Activated CD8-positive, alpha-beta T cell treated with anti-CD3 and anti-CD28 coated beads, Interleukin-2, amount 10 ng/mL, durations not matched to agents 7 days and 5 days (primary cell): ENCODE measurements at regions of chr17 and their contacts with region 1.

Region 1: GRCh38 chr17:43316522-43317142 is 82.2 kb upstream of the ARL4D start:
- DNase-seq: peak; percentile 40
- ATAC-seq: no peak
- H3K4me3 Mint-ChIP-seq: peak overlapping the region; percentile 15
- H3K27ac Mint-ChIP-seq: peak overlapping the region; percentile 67
- H3K4me1 Mint-ChIP-seq: peaks cover 18% of the 10 kb centered on the region
- H3K27me3 Mint-ChIP-seq: no peaks in the 10 kb centered on the region

Region 2: GRCh38 chr17:42997984-42998938 is 318.4 kb before region 1 on chr17 and contains the start of gene RPL27:
- CTCF ChIA-PET with region 1: no interaction called
- POLR2A ChIA-PET with region 1: interaction called, 27 read pairs
- DNase-seq: peak; percentile 99
- ATAC-seq: peak; percentile 99
- H3K4me3 Mint-ChIP-seq: peak within 1 kb of the TSS; percentile 96
- H3K27ac Mint-ChIP-seq: peak within 1 kb of the TSS; percentile 99
- H3K4me1 Mint-ChIP-seq: peaks cover 32% of the 10 kb centered on the region
- H3K27me3 Mint-ChIP-seq: no peaks in the 10 kb centered on the region
- total RNA-seq, gene RPL27: 949 to 980 TPM

Region 3: GRCh38 chr17:43125133-43125966 is 191.3 kb before region 1 on chr17 and contains the start of gene BRCA1:
- CTCF ChIA-PET with region 1: no interaction called
- POLR2A ChIA-PET with region 1: interaction called, 38 read pairs
- DNase-seq: peak; percentile 98
- ATAC-seq: peak; percentile 98
- H3K4me3 Mint-ChIP-seq: peak within 1 kb of the TSS; percentile 99
- H3K27ac Mint-ChIP-seq: peak within 1 kb of the TSS; percentile 98
- H3K4me1 Mint-ChIP-seq: peaks cover 39% of the 10 kb centered on the region
- H3K27me3 Mint-ChIP-seq: no peaks in the 10 kb centered on the region
- total RNA-seq, gene BRCA1: 77.2 to 85.3 TPM

Region 4: DNA sequence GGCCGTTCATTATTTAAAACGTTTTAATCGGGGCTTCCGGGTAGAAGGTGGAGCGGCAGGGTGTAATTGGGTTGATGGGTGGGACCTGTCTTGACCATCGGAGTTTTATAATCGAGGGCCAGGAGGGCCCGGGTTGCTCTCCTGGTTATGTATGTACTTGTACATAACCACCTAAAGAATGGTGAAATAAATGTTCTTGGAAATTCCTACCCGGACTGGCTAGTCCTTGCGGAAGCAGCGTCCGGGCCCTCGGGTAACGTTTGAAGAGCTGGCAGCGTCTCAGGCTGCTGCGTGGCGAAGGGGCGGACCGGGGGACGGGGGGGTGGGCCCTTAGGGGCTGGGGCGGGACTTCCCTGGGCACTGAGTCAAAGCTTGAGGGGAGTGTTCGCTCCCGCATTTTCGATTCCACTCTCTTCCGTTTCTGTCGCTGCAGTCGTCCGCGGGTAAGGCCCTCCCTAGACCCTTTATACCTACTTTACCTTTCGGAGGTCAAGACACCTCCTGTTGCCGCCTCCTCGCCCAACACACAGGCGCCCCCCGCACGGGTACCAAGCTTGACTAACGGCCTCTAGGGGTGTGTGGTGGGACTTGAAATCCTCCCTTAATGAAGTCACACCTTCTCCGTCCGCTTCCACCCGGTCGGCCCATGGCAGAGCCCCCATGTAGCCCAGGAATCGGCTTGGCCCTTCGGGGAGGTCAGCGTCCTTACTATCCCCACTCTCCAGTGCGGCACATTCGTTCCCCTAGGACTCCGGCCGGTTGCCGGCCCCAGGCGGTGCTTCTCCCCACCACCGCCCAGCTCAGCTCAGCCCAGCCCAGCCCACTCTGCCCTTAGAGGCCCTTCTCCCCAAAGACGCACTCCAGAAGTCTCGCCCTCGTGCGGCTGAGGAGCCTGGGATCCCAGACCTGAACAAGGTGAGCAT is 104.9 kb before region 1 on chr17 and contains the start of gene TMEM106A:
- CTCF ChIA-PET with region 1: interaction called, 16 read pairs
- POLR2A ChIA-PET with region 1: interaction called, 253 read pairs
- DNase-seq: peak; percentile 83
- ATAC-seq: peak; percentile 95
- H3K4me3 Mint-ChIP-seq: peak within 1 kb of the TSS; percentile 90
- H3K27ac Mint-ChIP-seq: peak within 1 kb of the TSS; percentile 82
- H3K4me1 Mint-ChIP-seq: peaks cover 30% of the 10 kb centered on the region
- H3K27me3 Mint-ChIP-seq: no peaks in the 10 kb centered on the region
- total RNA-seq, gene TMEM106A: 10.1 to 12.4 TPM

Region 5: GRCh38 chr17:43326481-43327275 is 10.0 kb after region 1 on chr17:
- CTCF ChIA-PET with region 1: no interaction called
- POLR2A ChIA-PET with region 1: no interaction called
- DNase-seq: no peak
- ATAC-seq: no peak
- H3K4me3 Mint-ChIP-seq: no peak overlapping the region
- H3K27ac Mint-ChIP-seq: no peak overlapping the region
- H3K4me1 Mint-ChIP-seq: no peaks in the 10 kb centered on the region
- H3K27me3 Mint-ChIP-seq: peaks cover 23% of the 10 kb centered on the region

Region 6: DNA sequence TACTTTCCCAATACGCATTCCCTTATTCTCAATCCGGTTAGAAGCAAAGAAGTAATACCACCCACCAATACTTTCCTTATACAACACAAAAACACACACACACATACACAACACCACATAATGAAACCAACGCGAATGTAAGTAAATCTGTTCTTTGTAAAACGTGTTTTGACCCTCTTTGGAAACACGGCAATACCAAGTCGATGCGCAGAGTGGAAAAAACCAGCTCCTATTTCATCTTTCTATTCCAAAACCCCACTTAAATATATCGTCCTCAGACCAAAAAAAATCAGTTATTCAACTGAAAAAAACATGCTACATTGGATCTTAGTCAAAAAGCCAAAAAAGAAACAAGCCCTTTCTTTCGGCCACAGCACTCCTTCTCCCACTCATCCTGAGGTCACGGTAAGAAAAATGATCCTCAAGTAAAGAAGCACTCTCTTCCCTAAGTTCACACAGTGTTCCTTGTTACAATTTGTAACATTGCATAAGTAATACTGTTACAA is 51.2 kb after region 1 on chr17:
- CTCF ChIA-PET with region 1: no interaction called
- POLR2A ChIA-PET with region 1: interaction called, 134 read pairs
- DNase-seq: peak; percentile 78
- ATAC-seq: peak; percentile 56
- H3K4me3 Mint-ChIP-seq: peak overlapping the region; percentile 92
- H3K27ac Mint-ChIP-seq: peak overlapping the region; percentile 100
- H3K4me1 Mint-ChIP-seq: peaks cover 52% of the 10 kb centered on the region
- H3K27me3 Mint-ChIP-seq: no peaks in the 10 kb centered on the region

Region 7: DNA sequence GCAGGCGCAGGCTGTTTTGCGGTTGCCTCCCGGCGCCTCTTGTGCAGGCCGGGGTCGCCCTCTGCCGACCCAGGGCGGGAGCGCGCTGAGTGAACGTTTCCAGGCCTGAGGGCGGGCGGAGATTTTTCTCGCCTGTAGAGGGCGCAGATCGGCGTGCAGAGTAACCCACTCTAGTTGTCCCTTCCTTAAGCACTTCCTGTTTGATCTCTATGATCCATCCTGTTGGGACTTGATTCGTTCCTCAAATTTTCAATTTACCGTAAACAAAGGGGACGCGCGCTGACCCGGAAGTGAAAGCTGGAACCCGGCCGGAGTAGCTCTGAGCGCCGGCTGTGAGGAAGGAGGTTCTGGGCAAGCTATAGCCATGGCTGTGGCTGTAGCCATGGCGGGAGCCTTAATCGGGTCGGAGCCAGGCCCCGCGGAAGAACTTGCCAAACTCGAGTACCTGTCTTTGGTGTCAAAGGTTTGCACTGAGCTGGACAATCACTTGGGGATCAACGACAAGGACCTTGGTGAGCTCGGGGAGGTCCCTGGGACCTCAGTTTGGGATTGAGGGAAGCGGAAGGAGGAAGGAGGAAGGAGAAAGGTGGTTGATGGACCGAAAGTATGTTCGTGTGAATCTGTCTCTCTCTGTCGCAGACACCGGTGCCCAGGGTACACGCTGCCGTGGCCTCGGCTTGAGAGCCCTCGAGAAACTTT is 167.2 kb after region 1 on chr17 and contains the start of gene DHX8:
- CTCF ChIA-PET with region 1: interaction called, 6 read pairs
- POLR2A ChIA-PET with region 1: interaction called, 12 read pairs
- DNase-seq: peak; percentile 98
- ATAC-seq: peak; percentile 99
- H3K4me3 Mint-ChIP-seq: peak within 1 kb of the TSS; percentile 100
- H3K27ac Mint-ChIP-seq: peak within 1 kb of the TSS; percentile 99
- H3K4me1 Mint-ChIP-seq: peaks cover 29% of the 10 kb centered on the region
- H3K27me3 Mint-ChIP-seq: peaks cover 3% of the 10 kb centered on the region
- total RNA-seq, gene DHX8: 52.7 to 56.4 TPM